ENCODE measurements at regions of chr5 and their contacts with region 1.

Region 1: GRCh38 chr5:115169487-115170133 is at the start of gene TRIM36:
- DNase-seq: peak; percentile 92
- H3K4me3 Mint-ChIP-seq: peak within 1 kb of the TSS; percentile 76
- H3K27ac Mint-ChIP-seq: no peak within 1 kb of the TSS
- H3K4me1 Mint-ChIP-seq: peaks cover 10% of the 10 kb centered on the region
- H3K27me3 Mint-ChIP-seq: peaks cover 60% of the 10 kb centered on the region
- total RNA-seq, gene TRIM36: not detected in 2 replicates

Region 2: DNA sequence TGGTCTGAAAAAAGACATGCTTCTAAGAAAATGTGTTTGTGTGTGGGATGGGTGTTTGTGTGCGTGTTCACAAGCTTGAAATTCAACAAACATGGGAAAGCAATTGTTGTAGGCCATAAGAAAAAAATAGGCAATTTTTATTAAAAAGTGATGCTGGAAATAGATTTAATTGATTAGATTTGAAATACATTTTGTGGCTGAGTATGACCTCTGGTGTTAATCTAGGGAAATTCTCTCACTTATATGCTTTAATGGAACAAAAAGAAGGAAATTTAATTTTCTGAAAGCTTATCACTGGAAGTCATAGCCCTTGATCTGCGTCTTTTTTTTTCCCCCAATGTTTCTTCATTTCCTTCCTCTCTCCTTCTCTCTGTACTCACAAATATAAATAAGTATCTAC is 811.3 kb before region 1 on chr5:
- intact Hi-C with region 1: loop called (anchors 5 kb)
- DNase-seq: no peak
- H3K4me3 Mint-ChIP-seq: no peak overlapping the region
- H3K27ac Mint-ChIP-seq: no peak overlapping the region
- H3K4me1 Mint-ChIP-seq: peaks cover 2% of the 10 kb centered on the region
- H3K27me3 Mint-ChIP-seq: peaks cover 36% of the 10 kb centered on the region

Region 3: GRCh38 chr5:114988096-114988495 is 181.5 kb before region 1 on chr5:
- intact Hi-C with region 1: no loop called
- DNase-seq: no peak
- H3K4me3 Mint-ChIP-seq: no peak overlapping the region
- H3K27ac Mint-ChIP-seq: no peak overlapping the region
- H3K4me1 Mint-ChIP-seq: no peaks in the 10 kb centered on the region
- H3K27me3 Mint-ChIP-seq: no peaks in the 10 kb centered on the region

Region 4: DNA sequence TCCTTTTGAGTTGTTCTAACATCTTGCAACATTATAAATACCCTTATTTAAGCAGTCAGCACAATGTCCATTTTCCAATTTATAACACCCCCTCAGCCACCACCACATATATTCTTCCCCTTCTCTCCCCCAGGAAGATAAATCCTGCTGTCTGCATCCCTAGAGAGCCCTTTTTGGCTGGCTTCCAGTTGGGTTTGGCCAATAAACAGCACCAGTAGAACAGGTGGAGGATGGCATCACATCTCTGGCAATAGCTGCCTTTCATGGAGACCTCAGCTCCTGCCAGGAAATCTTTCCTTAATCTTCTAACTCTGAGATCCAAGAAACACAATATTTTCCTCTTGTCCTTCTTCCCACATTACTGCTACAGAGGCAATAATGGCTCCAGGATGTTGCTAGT is 53.6 kb before region 1 on chr5:
- intact Hi-C with region 1: no loop called
- DNase-seq: no peak
- H3K4me3 Mint-ChIP-seq: no peak overlapping the region
- H3K27ac Mint-ChIP-seq: no peak overlapping the region
- H3K4me1 Mint-ChIP-seq: no peaks in the 10 kb centered on the region
- H3K27me3 Mint-ChIP-seq: peaks cover 3% of the 10 kb centered on the region

Region 5: GRCh38 chr5:115180165-115180709 is 10.6 kb after region 1 on chr5:
- intact Hi-C with region 1: loop called (anchors 1 kb)
- DNase-seq: no peak
- H3K4me3 Mint-ChIP-seq: peak overlapping the region; percentile 80
- H3K27ac Mint-ChIP-seq: no peak overlapping the region
- H3K4me1 Mint-ChIP-seq: peaks cover 8% of the 10 kb centered on the region
- H3K27me3 Mint-ChIP-seq: peaks cover 83% of the 10 kb centered on the region

Region 6: DNA sequence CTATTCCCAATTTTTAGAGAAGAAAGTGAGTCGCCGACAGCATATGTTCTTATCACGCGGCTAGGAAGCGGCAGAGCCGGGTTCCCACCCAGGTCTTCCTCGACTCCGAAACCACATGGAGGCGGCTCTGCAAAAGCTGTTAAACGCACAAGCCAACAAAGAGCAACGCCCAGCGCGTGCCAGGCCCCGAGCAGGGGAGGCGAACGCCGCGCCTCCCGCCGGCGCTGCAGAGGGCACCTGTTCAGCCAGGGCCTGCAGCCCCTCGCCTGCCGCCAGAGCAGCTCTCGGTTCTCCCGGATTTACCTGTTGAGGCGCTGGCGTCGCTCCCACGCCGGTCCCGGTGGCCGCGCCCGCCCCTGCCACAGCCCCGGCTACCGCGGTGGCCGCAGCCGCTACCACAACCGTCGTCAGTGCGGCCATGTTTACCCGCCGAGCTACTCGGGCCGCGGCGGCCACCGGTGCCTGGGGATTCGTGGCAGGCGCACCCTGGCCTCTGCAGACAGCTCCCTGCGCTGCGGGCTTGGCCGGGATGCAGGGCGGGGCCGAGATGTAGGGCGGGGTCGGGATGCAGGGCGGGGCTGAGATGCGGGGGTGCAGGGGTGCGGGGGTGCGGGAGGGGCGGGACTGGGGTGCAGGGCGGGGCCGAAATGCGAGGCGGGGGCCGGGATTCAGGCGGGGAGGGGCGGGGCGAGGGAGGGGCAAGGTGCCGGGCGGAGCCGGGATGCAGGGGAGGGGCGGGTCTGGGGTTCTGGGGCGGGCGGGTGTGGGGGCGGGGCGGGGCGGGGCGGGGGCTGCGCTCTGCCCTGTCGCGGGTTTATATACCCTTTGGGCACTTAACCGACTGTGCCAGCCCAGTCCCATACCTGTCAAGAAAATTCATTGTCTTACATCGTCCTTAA is 126.8 kb after region 1 on chr5 and contains the start of gene CCDC112:
- intact Hi-C with region 1: loop called (anchors 1 kb)
- DNase-seq: peak; percentile 57
- H3K4me3 Mint-ChIP-seq: peak within 1 kb of the TSS; percentile 82
- H3K27ac Mint-ChIP-seq: no peak within 1 kb of the TSS
- H3K4me1 Mint-ChIP-seq: peaks cover 5% of the 10 kb centered on the region
- H3K27me3 Mint-ChIP-seq: peaks cover 55% of the 10 kb centered on the region
- total RNA-seq, gene CCDC112: 0.32 and 0.34 TPM in 2 replicates

Measured in activated T-helper 2 cell treated with anti-CD3 and anti-CD28 coated beads, Interferon-gamma antibody, Interleukin-2, Interleukin-4, amounts not matched to agents 10 μg/mL and 5 μg/mL and 100 μg/mL, durations not matched to agents 14 hours and 24 hours and 36 hours (primary cell).